CD8-positive, alpha-beta T cell (primary cell): ENCODE measurements at regions of chr2 and their contacts with region 1.

Region 1: GRCh38 chr2:176126929-176127773 is 2.4 kb upstream of the HOXD8 start:
- DNase-seq: peak; percentile 36 to 81 (median 74)
- ATAC-seq: no peak
- H3K4me3 ChIP-seq: no peak overlapping the region
- H3K4me3 Mint-ChIP-seq: no peak overlapping the region
- H3K27ac ChIP-seq: no peak overlapping the region
- H3K27ac Mint-ChIP-seq: no peak overlapping the region
- H3K4me1 ChIP-seq: peaks cover 36% of the 10 kb centered on the region
- H3K4me1 Mint-ChIP-seq: peaks cover 31% of the 10 kb centered on the region
- H3K27me3 ChIP-seq: peaks cover 68 to 72% of the 10 kb centered on the region in 2 experiments
- H3K27me3 Mint-ChIP-seq: peaks cover 71% of the 10 kb centered on the region
- CTCF ChIP-seq: peak; percentile 99

Region 2: DNA sequence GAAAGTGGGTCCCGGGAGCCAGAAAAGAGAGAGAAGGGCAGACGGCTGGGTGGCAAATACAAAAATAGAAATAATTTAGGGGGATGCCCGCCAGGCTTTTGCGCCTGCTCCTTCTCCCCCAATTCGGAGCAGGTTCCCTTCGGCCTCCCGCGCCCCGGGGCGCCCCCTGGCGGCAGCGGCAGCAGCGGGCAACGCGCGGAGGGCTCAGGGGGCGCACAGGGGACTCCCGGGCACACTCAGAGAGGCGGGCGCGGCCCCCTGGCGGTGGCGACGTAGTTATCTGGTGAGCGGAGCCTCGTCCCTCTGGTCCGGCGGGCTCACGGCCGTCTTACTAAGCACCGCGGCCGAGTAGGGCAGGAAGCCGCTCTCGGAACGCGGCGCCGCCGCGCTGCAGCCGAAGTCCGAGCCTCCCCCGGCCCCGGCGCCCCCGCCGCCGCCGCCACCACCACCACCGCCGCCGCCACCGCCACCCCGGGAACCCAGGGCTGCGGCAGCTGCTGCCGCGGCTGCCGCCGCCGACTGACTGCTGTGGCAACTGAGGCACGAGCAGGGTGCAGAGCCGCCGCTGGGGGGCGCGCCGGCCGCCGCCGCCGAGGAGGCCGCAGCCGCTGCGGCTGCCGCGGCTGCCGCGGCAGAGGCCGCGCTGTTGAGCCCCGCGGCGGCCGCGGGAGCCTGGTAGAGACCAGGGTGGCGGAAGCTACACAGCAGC is 47.2 kb before region 1 on chr2:
- CTCF ChIA-PET with region 1: interaction called, 6 read pairs
- POLR2A ChIA-PET with region 1: interaction called, 3 read pairs
- intact Hi-C with region 1: loop called (anchors 5 kb)
- DNase-seq: peak in 2 of 9 experiments; percentile 29 to 43
- ATAC-seq: peak; percentile 31
- H3K4me3 ChIP-seq: no peak overlapping the region
- H3K4me3 Mint-ChIP-seq: peak overlapping the region; percentile 51
- H3K27ac ChIP-seq: no peak overlapping the region
- H3K27ac Mint-ChIP-seq: no peak overlapping the region
- H3K4me1 ChIP-seq: peaks cover 11% of the 10 kb centered on the region
- H3K4me1 Mint-ChIP-seq: peaks cover 12% of the 10 kb centered on the region
- H3K27me3 ChIP-seq: peaks cover 77 to 85% of the 10 kb centered on the region in 2 experiments
- H3K27me3 Mint-ChIP-seq: peaks cover 83% of the 10 kb centered on the region
- CTCF ChIP-seq: no peak

Region 3: DNA sequence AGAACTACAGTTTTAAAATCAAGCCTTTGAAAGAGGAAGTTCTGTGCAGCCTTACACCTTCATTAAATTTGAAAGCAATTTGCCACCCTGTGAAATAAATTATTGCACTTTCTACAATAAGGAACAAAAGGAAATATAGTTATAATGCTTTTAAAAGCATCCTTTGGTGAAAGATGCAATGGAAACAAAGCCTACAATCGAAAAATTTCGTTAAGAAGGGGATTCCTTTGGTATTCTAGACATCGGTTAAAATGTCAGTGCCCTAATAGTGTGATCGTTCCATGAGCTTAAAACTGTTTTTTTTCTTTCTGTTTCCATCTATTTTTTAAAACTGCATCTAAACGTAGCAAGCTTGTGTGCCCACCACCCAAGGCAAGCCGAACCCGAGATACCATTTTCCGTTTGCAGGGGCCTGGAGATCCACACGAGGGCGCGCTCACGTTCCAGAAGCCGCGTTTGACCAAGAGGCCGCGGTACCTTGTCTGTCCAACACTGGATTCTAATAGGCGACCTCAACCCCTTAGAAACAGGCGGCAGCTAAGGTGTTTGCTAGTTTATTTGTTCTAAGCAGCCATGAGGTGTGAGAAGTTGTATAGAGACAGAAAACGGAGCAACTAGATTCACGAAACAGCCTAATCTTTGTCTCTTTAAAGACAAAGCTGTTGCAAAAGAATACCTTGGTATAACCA is 16.0 kb before region 1 on chr2:
- CTCF ChIA-PET with region 1: interaction called, 12 read pairs
- POLR2A ChIA-PET with region 1: no interaction called
- intact Hi-C with region 1: no loop called
- DNase-seq: no peak
- ATAC-seq: no peak
- H3K4me3 ChIP-seq: no peak overlapping the region
- H3K4me3 Mint-ChIP-seq: no peak overlapping the region
- H3K27ac ChIP-seq: no peak overlapping the region
- H3K27ac Mint-ChIP-seq: no peak overlapping the region
- H3K4me1 ChIP-seq: peaks cover 11% of the 10 kb centered on the region
- H3K4me1 Mint-ChIP-seq: peaks cover 18% of the 10 kb centered on the region
- H3K27me3 ChIP-seq: peaks cover 60 to 75% of the 10 kb centered on the region in 2 experiments
- H3K27me3 Mint-ChIP-seq: peaks cover 74% of the 10 kb centered on the region
- CTCF ChIP-seq: no peak

Region 4: GRCh38 chr2:176187899-176188773 is 61.0 kb after region 1 on chr2 and contains the start of gene HOXD1:
- CTCF ChIA-PET with region 1: no interaction called
- POLR2A ChIA-PET with region 1: no interaction called
- intact Hi-C with region 1: no loop called
- DNase-seq: no peak
- ATAC-seq: no peak
- H3K4me3 ChIP-seq: peak within 1 kb of the TSS; percentile 42 to 44
- H3K4me3 Mint-ChIP-seq: peak within 1 kb of the TSS; percentile 85
- H3K27ac ChIP-seq: no peak within 1 kb of the TSS
- H3K27ac Mint-ChIP-seq: no peak within 1 kb of the TSS
- H3K4me1 ChIP-seq: peaks cover 16% of the 10 kb centered on the region
- H3K4me1 Mint-ChIP-seq: peaks cover 23% of the 10 kb centered on the region
- H3K27me3 ChIP-seq: peaks cover 26 to 34% of the 10 kb centered on the region in 2 experiments
- H3K27me3 Mint-ChIP-seq: peaks cover 69% of the 10 kb centered on the region
- CTCF ChIP-seq: no peak
- total RNA-seq, gene HOXD1: not detected

Region 5: DNA sequence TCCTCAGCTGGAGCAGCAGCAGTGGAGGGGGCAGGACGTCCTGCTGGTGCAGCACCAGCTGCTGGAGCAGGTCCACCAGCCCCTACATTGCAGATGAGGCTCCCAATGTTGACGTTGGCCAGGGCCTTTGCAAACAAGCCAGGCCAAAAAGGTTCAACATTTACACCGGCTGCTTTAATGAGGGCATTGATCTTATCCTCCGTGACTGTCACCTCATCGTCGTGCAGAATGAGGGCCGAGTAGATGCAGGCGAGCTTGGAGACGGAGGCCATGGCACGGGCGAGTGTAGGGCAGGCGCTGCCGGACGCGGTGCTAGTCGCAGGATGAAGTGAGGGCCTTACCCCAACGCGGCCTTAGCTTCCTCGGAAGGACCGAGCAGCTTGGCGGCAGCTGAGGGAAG is 73.8 kb after region 1 on chr2:
- CTCF ChIA-PET with region 1: no interaction called
- POLR2A ChIA-PET with region 1: no interaction called
- intact Hi-C with region 1: no loop called
- DNase-seq: no peak
- ATAC-seq: no peak
- H3K4me3 ChIP-seq: no peak overlapping the region
- H3K4me3 Mint-ChIP-seq: no peak overlapping the region
- H3K27ac ChIP-seq: no peak overlapping the region
- H3K27ac Mint-ChIP-seq: no peak overlapping the region
- H3K4me1 ChIP-seq: no peaks in the 10 kb centered on the region
- H3K4me1 Mint-ChIP-seq: no peaks in the 10 kb centered on the region
- H3K27me3 ChIP-seq: no peaks in the 10 kb centered on the region
- H3K27me3 Mint-ChIP-seq: peaks cover 37% of the 10 kb centered on the region
- CTCF ChIP-seq: no peak

Region 6: GRCh38 chr2:176554101-176555048 is 427.2 kb after region 1 on chr2:
- CTCF ChIA-PET with region 1: interaction called, 25 read pairs
- POLR2A ChIA-PET with region 1: interaction called, 3 read pairs
- intact Hi-C with region 1: loop called (anchors 1 to 5 kb)
- DNase-seq: peak in 6 of 9 experiments; percentile 16 to 72 (median 40)
- ATAC-seq: peak; percentile 59
- H3K4me3 ChIP-seq: peak overlapping the region; percentile 47 to 51
- H3K4me3 Mint-ChIP-seq: peak overlapping the region; percentile 84
- H3K27ac ChIP-seq: no peak overlapping the region
- H3K27ac Mint-ChIP-seq: no peak overlapping the region
- H3K4me1 ChIP-seq: no peaks in the 10 kb centered on the region
- H3K4me1 Mint-ChIP-seq: peaks cover 11% of the 10 kb centered on the region
- H3K27me3 ChIP-seq: peaks cover 3% of the 10 kb centered on the region in 2 experiments
- H3K27me3 Mint-ChIP-seq: peaks cover 42% of the 10 kb centered on the region
- CTCF ChIP-seq: peak; percentile 77

Region 7: DNA sequence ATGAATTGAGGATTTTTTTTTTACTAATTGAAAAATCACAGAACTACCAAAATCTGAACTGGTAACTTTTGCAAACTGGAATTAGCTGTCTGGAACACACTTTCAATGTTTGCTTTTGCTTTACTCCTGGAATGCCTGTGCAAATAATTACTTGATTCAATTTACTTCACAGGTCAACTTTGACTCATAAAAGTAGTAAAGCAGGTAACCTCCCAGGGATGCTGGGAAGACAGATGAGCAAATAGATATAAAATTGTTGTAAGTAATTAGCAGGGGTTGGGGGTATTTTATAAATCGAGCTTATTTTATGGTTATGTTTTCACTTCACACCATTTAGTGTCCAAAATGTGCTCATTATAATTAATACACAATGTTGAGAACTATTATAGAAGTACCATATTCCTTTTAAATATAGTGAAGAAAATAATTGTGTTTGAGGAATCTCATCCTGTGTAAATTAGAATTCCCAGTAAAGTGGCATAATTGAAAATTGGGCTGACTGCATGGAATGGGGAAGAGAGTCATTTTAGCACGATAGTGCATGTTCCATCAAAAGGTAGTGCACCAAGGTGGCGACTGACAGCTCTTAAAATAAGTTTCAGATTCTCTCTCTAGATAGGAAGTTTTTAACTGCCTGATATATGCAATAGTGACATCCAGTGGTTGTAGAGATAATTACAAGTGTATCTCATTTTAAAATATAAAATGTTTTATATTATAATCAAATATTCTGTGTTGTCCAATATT is 687.3 kb after region 1 on chr2:
- CTCF ChIA-PET with region 1: interaction called, 10 read pairs
- POLR2A ChIA-PET with region 1: interaction called, 5 read pairs
- intact Hi-C with region 1: loop called in 1 of 2 experiments (anchors 5 kb)
- DNase-seq: peak in 2 of 9 experiments; percentile 51 to 65
- ATAC-seq: peak; percentile 79
- H3K4me3 ChIP-seq: no peak overlapping the region
- H3K4me3 Mint-ChIP-seq: peak overlapping the region; percentile 19
- H3K27ac ChIP-seq: no peak overlapping the region
- H3K27ac Mint-ChIP-seq: no peak overlapping the region
- H3K4me1 ChIP-seq: peaks cover 45% of the 10 kb centered on the region
- H3K4me1 Mint-ChIP-seq: peaks cover 42% of the 10 kb centered on the region
- H3K27me3 ChIP-seq: no peaks in the 10 kb centered on the region
- H3K27me3 Mint-ChIP-seq: no peaks in the 10 kb centered on the region
- CTCF ChIP-seq: peak; percentile 95

Region 8: GRCh38 chr2:177419274-177419673 is 1292.1 kb after region 1 on chr2:
- CTCF ChIA-PET with region 1: no interaction called
- POLR2A ChIA-PET with region 1: no interaction called
- intact Hi-C with region 1: loop called in 1 of 2 experiments (anchors 5 kb)
- DNase-seq: no peak
- ATAC-seq: no peak
- H3K4me3 ChIP-seq: no peak overlapping the region
- H3K4me3 Mint-ChIP-seq: no peak overlapping the region
- H3K27ac ChIP-seq: no peak overlapping the region
- H3K27ac Mint-ChIP-seq: no peak overlapping the region
- H3K4me1 ChIP-seq: no peaks in the 10 kb centered on the region
- H3K4me1 Mint-ChIP-seq: peaks cover 27% of the 10 kb centered on the region
- H3K27me3 ChIP-seq: no peaks in the 10 kb centered on the region
- H3K27me3 Mint-ChIP-seq: no peaks in the 10 kb centered on the region
- CTCF ChIP-seq: no peak